BJ (cell line): ENCODE measurements at regions of chr5 and their contacts with region 1.

Region 1: DNA sequence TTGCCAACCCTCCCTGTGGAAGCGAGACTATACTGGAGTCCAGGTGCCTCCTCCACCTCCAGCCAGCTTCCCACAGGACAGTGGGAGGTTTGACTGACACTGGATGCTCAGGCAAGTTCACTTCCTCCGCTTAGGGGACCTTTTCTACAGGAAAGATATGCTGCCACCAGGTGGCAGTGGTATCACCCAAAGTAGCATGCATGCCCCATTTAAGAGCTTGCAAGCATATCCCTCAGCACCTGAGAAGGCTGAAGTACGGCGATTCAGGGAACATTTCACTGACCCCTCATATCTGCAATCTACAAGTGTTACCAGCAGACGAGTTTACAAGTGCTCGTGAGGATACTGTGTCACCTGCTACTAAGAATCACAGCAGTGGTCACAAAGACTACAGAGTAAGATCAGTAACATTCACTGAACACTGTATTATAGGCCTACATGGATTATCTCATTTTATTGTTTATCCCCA is 75.5 kb downstream of the KLHL3 start:
- DNase-seq: peak; percentile 16
- H3K4me3 ChIP-seq: no peak overlapping the region
- H3K27me3 ChIP-seq: no peaks in the 10 kb centered on the region
- CTCF ChIP-seq: peak; percentile 85

Region 2: GRCh38 chr5:137629646-137630045 is 30.7 kb before region 1 on chr5:
- CTCF ChIA-PET with region 1: interaction called, 37 read pairs
- POLR2A ChIA-PET with region 1: no interaction called
- DNase-seq: no peak
- H3K4me3 ChIP-seq: no peak overlapping the region
- H3K27me3 ChIP-seq: no peaks in the 10 kb centered on the region; the same call in 1 of the 2 replicates
- CTCF ChIP-seq: peak; percentile 82

Region 3: DNA sequence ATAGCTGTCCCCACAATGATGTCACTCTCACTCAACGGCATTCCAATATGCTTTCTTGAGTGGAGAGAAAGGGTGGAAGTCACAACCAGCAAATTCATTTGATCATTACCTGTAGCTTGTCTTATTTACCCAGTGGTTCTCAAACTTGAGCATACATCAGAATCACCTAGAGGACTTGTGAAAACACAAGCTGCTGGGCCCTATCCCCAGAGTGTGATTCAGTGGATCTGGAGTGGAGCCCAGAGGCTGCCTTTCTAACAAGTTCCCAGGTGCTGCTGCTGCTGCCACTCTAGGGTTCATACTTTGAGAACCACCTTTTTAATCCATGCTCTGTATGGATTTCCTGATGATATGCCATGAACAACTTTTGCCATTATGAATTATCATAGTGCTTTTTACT is 19.2 kb before region 1 on chr5:
- CTCF ChIA-PET with region 1: interaction called, 32 read pairs
- POLR2A ChIA-PET with region 1: no interaction called
- DNase-seq: no peak
- H3K4me3 ChIP-seq: no peak overlapping the region
- H3K27me3 ChIP-seq: 0 out of 2 replicates have a peak, but pooled peaks cover 2% of the 10 kb centered on the region
- CTCF ChIP-seq: no peak

Region 4: GRCh38 chr5:137672019-137672418 is 11.6 kb after region 1 on chr5:
- CTCF ChIA-PET with region 1: interaction called, 18 read pairs
- POLR2A ChIA-PET with region 1: no interaction called
- DNase-seq: no peak
- H3K4me3 ChIP-seq: no peak overlapping the region
- H3K27me3 ChIP-seq: no peaks in the 10 kb centered on the region
- CTCF ChIP-seq: no peak

Region 5: DNA sequence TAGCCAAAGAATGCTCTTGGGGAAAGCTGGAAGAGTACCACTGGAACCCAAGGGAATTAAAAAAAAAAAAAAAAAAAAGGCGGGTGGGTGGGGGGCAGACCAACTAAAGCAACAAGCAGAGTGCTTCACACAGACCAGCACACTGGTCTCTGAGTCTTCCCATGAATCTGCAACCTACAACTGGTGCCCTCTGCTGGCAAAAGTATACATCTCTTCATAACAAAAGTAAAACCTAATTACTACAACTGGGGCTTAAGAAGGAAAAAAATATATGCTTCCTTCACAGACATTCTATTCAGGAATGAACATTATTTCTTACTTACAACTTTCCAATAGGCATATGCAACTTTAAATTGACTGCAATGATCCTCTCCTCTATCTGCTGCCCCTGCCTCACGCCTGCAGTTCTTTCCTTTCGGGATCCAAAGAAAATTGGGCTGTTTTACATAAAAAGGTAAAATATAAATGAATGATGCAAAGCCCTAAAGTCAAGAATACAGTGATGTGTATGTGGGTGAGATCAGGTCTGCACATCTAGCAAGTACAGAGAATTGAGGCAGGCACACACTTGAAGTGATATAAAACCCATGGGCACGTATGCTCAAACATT is 82.8 kb after region 1 on chr5:
- CTCF ChIA-PET with region 1: interaction called, 247 read pairs
- POLR2A ChIA-PET with region 1: interaction called, 10 read pairs
- DNase-seq: no peak
- H3K4me3 ChIP-seq: no peak overlapping the region
- H3K27me3 ChIP-seq: no peaks in the 10 kb centered on the region
- CTCF ChIP-seq: peak; percentile 67